Mucosa of descending colon (tissue), 3 donors: ENCODE measurements at regions of chr22 and their contacts with region 1.

Region 1: GRCh38 chr22:19730655-19731360 is 7.5 kb downstream of the GP1BB start:
- DNase-seq: peak; percentile 80 to 89 (median 85)
- ATAC-seq: peak; percentile 89
- H3K4me3 ChIP-seq: no peak overlapping the region
- H3K4me1 ChIP-seq: peaks cover 7% of the 10 kb centered on the region
- CTCF ChIP-seq: peak; percentile 89

Region 2: GRCh38 chr22:19909350-19910179 is 178.8 kb after region 1 on chr22:
- intact Hi-C with region 1: loop called (anchors 2 kb)
- DNase-seq: peak; percentile 77 to 95 (median 87)
- ATAC-seq: peak; percentile 95
- H3K4me3 ChIP-seq: no peak overlapping the region
- H3K4me1 ChIP-seq: no peaks in the 10 kb centered on the region
- CTCF ChIP-seq: peak; percentile 83